ENCODE measurements at regions of chr11 and their contacts with region 1.

Region 1: DNA sequence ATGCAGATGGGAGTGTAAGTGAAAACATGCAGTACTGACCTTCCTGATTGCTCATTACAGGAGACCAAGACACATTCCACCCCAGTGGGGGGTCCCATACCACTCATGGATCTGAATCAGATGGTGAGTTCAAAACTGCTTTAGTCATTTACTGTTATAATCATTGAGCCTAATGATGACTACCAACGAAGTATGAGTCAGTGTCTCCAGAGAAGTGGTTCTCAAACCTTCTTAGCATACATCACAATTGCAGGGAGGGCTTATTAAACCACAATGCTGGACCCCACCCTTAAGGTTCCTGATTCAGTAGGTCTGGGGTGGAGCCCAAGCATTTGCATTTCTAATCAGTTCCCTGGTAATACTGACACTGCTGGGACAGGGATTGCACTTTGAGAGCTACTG is 75.8 kb downstream of the CD44 start:
- DNase-seq: peak in 4 of 14 experiments; percentile 47 to 72 (median 56)
- ATAC-seq: peak; percentile 22
- H3K4me3 ChIP-seq: no peak overlapping the region
- H3K4me3 Mint-ChIP-seq: peak overlapping the region; percentile 62
- H3K27ac ChIP-seq: peak overlapping the region; percentile 14 to 52
- H3K27ac Mint-ChIP-seq: peak overlapping the region; percentile 95
- H3K4me1 ChIP-seq: peaks cover 47% of the 10 kb centered on the region
- H3K4me1 Mint-ChIP-seq: peaks cover 96% of the 10 kb centered on the region
- H3K27me3 ChIP-seq: no peaks in the 10 kb centered on the region
- H3K27me3 Mint-ChIP-seq: no peaks in the 10 kb centered on the region
- CTCF ChIP-seq: no peak

Region 2: DNA sequence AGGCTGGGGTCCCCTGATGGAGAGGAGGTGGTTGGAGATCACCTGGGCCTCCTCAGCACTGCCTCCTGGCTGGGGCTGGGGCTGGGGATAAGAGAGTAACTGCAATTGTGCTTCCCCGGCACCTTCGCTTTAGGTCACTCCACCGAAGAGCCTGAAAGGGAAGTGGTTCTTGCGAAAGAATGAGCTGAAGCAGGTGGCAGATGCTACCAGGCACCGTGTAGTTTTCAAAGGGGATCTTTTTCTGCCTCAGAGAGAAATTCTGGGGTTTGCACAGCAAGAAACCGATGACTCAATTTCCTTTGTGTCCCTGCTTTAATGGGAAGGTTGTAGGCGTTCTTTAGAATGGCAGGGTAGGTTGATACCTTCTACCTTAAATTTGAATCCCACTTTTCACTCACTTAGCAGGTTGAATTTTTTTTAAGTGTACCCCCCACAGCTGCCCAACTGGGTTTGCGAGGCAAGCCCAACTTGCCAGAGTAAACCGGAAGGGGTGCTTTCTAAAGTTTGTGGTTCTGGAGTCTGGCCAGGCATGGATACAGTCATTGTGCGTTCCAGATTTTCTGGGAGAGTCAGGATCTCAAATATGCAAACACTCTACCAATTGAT is 70.6 kb before region 1 on chr11:
- CTCF ChIA-PET with region 1: no interaction called
- POLR2A ChIA-PET with region 1: interaction called, 3 read pairs
- intact Hi-C with region 1: loop called in 1 of 2 experiments (anchors 2 kb)
- DNase-seq: peak in 13 of 14 experiments; percentile 46 to 88 (median 61)
- ATAC-seq: peak; percentile 64
- H3K4me3 ChIP-seq: peak overlapping the region; percentile 88
- H3K4me3 Mint-ChIP-seq: peak overlapping the region; percentile 84
- H3K27ac ChIP-seq: peak overlapping the region; percentile 73 to 81
- H3K27ac Mint-ChIP-seq: peak overlapping the region; percentile 96
- H3K4me1 ChIP-seq: peaks cover 82% of the 10 kb centered on the region
- H3K4me1 Mint-ChIP-seq: peaks cover 83% of the 10 kb centered on the region
- H3K27me3 ChIP-seq: no peaks in the 10 kb centered on the region
- H3K27me3 Mint-ChIP-seq: no peaks in the 10 kb centered on the region
- CTCF ChIP-seq: no peak

Region 3: GRCh38 chr11:35173011-35173511 is 41.7 kb before region 1 on chr11:
- CTCF ChIA-PET with region 1: no interaction called
- POLR2A ChIA-PET with region 1: interaction called, 4 read pairs
- intact Hi-C with region 1: loop called in 1 of 2 experiments (anchors 5 kb)
- DNase-seq: no peak
- ATAC-seq: no peak
- H3K4me3 ChIP-seq: peak overlapping the region; percentile 1
- H3K4me3 Mint-ChIP-seq: peak overlapping the region; percentile 72
- H3K27ac ChIP-seq: peak overlapping the region; percentile 74
- H3K27ac Mint-ChIP-seq: peak overlapping the region; percentile 96
- H3K4me1 ChIP-seq: peaks cover 90% of the 10 kb centered on the region
- H3K4me1 Mint-ChIP-seq: peaks cover 95% of the 10 kb centered on the region
- H3K27me3 ChIP-seq: no peaks in the 10 kb centered on the region
- H3K27me3 Mint-ChIP-seq: no peaks in the 10 kb centered on the region
- CTCF ChIP-seq: no peak

Region 4: DNA sequence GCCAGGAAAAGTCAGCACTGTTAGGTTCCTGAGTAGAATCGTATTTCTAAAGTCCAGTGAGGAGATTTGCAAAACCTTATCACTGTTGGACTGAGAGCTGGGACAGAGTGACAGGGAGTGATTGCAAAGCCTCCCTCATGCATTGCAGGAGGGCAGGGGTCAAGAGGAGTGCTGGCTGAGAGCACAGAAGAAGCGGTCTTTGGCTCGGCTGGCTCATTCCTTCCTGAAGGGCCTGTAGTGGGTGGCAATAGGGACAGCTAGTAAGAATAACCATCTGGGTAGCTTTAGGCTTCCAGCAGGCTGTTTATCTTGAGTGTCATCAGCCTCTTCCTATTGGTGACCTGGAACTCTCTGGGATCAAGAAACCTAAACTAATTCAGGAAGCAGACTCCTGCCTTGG is 22.4 kb before region 1 on chr11:
- CTCF ChIA-PET with region 1: no interaction called
- POLR2A ChIA-PET with region 1: no interaction called
- intact Hi-C with region 1: loop called in 1 of 2 experiments (anchors 2 kb)
- DNase-seq: no peak
- ATAC-seq: no peak
- H3K4me3 ChIP-seq: no peak overlapping the region
- H3K4me3 Mint-ChIP-seq: peak overlapping the region; percentile 42
- H3K27ac ChIP-seq: peak overlapping the region in 1 of 2 donors; percentile 32
- H3K27ac Mint-ChIP-seq: peak overlapping the region; percentile 85
- H3K4me1 ChIP-seq: peaks cover 42% of the 10 kb centered on the region
- H3K4me1 Mint-ChIP-seq: peaks cover 100% of the 10 kb centered on the region
- H3K27me3 ChIP-seq: no peaks in the 10 kb centered on the region
- H3K27me3 Mint-ChIP-seq: no peaks in the 10 kb centered on the region
- CTCF ChIP-seq: no peak

Region 5: GRCh38 chr11:35200811-35201341 is 13.9 kb before region 1 on chr11:
- CTCF ChIA-PET with region 1: no interaction called
- POLR2A ChIA-PET with region 1: interaction called, 6 read pairs
- intact Hi-C with region 1: loop called in 1 of 2 experiments (anchors 2 kb)
- DNase-seq: no peak
- ATAC-seq: no peak
- H3K4me3 ChIP-seq: no peak overlapping the region
- H3K4me3 Mint-ChIP-seq: no peak overlapping the region
- H3K27ac ChIP-seq: no peak overlapping the region
- H3K27ac Mint-ChIP-seq: peak overlapping the region; percentile 71
- H3K4me1 ChIP-seq: no peaks in the 10 kb centered on the region
- H3K4me1 Mint-ChIP-seq: peaks cover 93% of the 10 kb centered on the region
- H3K27me3 ChIP-seq: no peaks in the 10 kb centered on the region
- H3K27me3 Mint-ChIP-seq: no peaks in the 10 kb centered on the region
- CTCF ChIP-seq: no peak

Region 6: GRCh38 chr11:35305670-35306382 is 91.0 kb after region 1 on chr11:
- CTCF ChIA-PET with region 1: interaction called, 3 read pairs
- POLR2A ChIA-PET with region 1: no interaction called
- intact Hi-C with region 1: loop called in 1 of 2 experiments (anchors 10 kb)
- DNase-seq: peak; percentile 23 to 78 (median 32)
- ATAC-seq: peak; percentile 77
- H3K4me3 ChIP-seq: no peak overlapping the region
- H3K4me3 Mint-ChIP-seq: peak overlapping the region; percentile 65
- H3K27ac ChIP-seq: no peak overlapping the region
- H3K27ac Mint-ChIP-seq: peak overlapping the region; percentile 4
- H3K4me1 ChIP-seq: peaks cover 28% of the 10 kb centered on the region
- H3K4me1 Mint-ChIP-seq: peaks cover 26% of the 10 kb centered on the region
- H3K27me3 ChIP-seq: no peaks in the 10 kb centered on the region
- H3K27me3 Mint-ChIP-seq: no peaks in the 10 kb centered on the region
- CTCF ChIP-seq: peak; percentile 76